ENCODE measurements at regions of chr17 and their contacts with region 1.

Region 1: DNA sequence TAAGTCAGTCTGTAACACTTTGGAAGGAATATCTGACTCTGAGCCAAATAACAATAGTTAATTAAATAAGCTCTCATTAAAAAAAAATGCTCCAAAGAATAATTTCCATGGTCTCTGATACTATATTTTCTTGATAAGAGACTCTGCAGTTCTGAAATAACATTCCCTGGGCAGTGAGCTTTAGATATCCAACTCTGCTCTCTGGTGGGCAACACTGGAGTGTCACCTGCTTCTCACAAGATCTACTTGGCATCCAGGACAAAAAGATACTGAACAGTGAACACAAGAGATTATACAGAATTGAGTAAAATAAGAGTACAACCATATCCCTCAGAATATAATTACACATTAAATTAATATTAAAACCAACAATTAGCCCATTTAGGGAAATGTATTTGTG is 13.7 kb downstream of the BLMH start:
- DNase-seq: no peak
- ATAC-seq: no peak

Region 2: DNA sequence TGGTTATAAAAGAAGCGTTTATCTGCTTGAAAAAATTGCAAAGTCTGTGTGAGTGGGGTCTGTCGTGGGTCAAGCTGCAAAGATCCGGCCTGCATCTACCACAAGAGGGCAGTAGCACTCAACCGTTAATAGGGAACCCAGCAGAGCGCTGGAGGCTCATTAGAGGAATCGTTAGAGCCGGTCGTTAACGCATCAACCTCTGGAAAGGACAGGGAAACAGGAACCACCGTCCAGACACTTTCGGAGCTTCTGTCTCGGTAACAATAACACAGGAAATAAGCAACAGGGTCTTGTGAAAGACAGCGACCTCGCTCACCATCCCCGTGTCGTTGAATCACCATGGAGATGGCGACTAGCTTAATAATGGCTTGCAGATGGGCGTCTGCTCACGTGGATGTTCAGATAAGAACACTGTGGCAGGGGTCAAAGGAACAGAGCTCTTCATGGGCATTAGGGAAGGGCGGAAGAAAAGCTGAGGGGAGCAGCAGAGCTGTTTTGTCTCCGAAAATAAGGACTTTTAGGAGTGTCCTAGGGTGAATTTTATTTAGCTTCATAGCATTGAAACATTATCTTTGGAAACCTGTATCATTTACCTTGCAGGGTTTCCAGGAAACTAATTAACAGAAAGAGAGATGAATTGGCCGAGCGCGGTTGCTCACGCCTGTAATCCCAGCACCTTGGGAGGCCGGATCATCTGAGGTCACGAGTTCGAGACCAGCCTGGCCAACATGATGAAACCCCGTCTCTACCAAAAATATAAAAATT is 173.3 kb before region 1 on chr17:
- intact Hi-C with region 1: loop called (anchors 2 kb)
- DNase-seq: peak; percentile 84
- ATAC-seq: peak; percentile 97

Region 3: DNA sequence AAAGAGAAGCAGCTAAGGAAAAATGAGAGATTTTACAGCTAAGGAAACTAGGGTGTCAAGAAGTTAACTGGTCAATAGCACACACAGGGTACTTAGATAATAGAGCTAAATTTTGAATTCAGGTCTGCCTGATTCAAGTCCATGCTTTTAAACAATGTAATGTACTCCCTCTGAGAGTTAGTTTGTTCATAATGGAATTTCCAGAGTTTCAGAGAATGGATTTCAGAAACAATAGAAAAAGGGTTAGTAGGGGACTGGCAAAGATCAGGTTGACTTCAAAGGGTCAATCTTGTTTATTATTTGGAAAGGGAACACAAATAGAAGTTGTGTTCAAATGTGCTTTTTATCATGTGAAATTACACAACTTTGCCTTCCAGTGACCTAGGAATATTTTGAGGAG is 143.5 kb before region 1 on chr17:
- intact Hi-C with region 1: loop called (anchors 5 kb)
- DNase-seq: no peak
- ATAC-seq: no peak